Vagina (tissue), 2 donors: ENCODE measurements at regions of chr16 and their contacts with region 1.

Region 1: DNA sequence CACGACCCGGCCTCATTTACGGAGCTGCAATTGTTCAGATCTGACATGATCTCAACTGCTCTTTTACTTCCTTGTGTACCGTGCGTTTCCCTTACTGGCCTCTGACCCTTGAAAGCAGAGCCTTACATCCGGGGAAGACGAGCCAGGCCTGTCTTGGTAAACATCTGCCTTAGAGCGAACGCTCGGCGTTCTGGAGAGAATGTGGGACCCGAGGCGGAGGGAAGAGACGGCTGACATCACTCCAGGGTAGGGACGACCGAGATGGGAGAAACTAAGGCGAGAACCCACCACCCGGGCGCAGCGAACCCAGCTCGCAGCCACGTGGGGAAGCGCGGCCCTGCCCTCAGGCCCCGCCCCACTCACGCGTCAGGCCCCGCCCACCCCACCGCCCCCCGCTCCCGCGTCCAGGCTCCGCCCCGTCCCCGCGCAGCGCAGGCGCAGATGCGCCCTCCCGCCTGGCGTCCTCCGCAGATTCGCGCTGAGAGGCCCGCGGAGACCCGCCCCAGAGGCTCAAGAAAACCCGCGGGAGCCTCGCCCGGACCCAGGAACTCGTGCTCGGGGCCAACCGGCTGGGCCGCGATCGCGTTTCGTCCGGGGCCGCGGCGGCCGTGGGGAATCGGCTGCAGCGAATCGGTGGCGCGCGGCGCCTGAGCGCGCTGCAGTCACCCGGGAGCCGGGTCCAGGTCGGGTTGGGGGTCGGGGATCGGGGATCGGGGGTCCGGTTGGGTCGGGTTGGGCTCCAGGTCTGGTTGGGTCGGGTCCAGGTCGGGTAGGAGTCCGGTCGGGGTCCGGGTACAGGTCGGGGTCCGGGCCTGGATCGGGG is at the start of gene TELO2:
- DNase-seq: no peak
- H3K4me3 ChIP-seq: peak within 1 kb of the TSS; percentile 66 to 93
- H3K27ac ChIP-seq: peak within 1 kb of the TSS; percentile 63
- H3K4me1 ChIP-seq: peaks cover 25% of the 10 kb centered on the region
- H3K27me3 ChIP-seq: no peaks in the 10 kb centered on the region
- CTCF ChIP-seq: no peak
- POLR2A ChIP-seq: no peak
- total RNA-seq, gene TELO2: 23.8 TPM

Region 2: DNA sequence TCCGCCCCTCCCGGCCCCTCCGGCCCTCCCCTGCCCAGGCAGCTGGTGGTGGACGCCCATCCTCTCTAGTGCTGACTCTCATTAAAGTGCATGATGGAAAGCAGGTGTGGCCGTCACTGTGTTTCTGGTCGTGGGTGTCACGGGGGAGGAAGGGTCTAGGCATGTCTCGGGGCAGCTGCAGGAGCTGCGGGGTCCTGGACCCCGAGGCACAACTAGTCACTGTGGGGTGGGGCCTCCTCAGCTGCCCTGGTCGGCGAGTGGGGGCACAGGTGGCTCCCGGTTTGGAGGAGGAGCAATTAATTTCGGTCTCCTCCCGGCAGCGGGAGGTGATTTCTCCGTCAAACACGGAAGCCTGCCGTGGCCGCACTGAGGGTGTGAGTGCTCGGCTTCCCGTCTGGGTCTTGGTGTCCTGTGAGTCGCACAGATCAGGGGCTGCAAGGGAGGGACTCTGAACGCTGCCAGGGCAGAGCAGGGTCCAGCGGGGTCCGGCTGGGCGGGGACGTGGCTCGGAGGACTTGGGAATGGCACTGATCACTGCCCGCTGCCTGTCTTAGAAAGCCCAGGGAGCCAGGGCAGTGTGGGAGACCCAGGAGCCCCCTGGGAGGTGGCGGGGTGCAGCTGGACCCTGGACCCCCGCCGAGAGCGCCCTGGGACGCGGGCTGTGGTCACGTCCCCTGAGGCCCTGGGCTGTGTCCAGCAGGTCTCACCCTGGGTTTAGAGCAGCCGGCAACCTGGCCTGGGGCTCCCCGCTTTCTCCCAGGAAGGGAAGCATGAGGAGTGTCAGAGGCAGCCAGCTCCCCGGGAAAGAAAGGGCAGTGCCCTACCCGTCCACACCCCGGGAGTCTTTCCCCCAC is 234.0 kb before region 1 on chr16:
- intact Hi-C with region 1: no loop called
- DNase-seq: no peak
- H3K4me3 ChIP-seq: no peak overlapping the region
- H3K27ac ChIP-seq: no peak overlapping the region
- H3K4me1 ChIP-seq: peaks cover 7% of the 10 kb centered on the region
- H3K27me3 ChIP-seq: peaks cover 8% of the 10 kb centered on the region
- CTCF ChIP-seq: no peak
- POLR2A ChIP-seq: no peak

Region 3: GRCh38 chr16:1543085-1543896 is 50.2 kb after region 1 on chr16:
- intact Hi-C with region 1: loop called (anchors 10 kb)
- DNase-seq: no peak
- H3K4me3 ChIP-seq: no peak overlapping the region
- H3K27ac ChIP-seq: peak overlapping the region; percentile 56
- H3K4me1 ChIP-seq: peaks cover 77% of the 10 kb centered on the region
- H3K27me3 ChIP-seq: no peaks in the 10 kb centered on the region
- CTCF ChIP-seq: no peak
- POLR2A ChIP-seq: no peak

Region 4: GRCh38 chr16:1656808-1657617 is 163.9 kb after region 1 on chr16:
- intact Hi-C with region 1: no loop called
- DNase-seq: no peak
- H3K4me3 ChIP-seq: no peak overlapping the region
- H3K27ac ChIP-seq: no peak overlapping the region
- H3K4me1 ChIP-seq: no peaks in the 10 kb centered on the region
- H3K27me3 ChIP-seq: no peaks in the 10 kb centered on the region
- CTCF ChIP-seq: no peak
- POLR2A ChIP-seq: no peak